Thyroid gland (tissue), 4 donors: ENCODE measurements at regions of chr16 and their contacts with region 1.

Region 1: GRCh38 chr16:83023640-83024039 is 396.9 kb downstream of the CDH13 start:
- DNase-seq: no peak
- H3K4me3 ChIP-seq: no peak overlapping the region
- H3K27ac ChIP-seq: no peak overlapping the region
- H3K4me1 ChIP-seq: no peaks in the 10 kb centered on the region
- H3K27me3 ChIP-seq: no peaks in the 10 kb centered on the region
- CTCF ChIP-seq: no peak
- POLR2A ChIP-seq: no peak

Region 2: GRCh38 chr16:82963653-82964052 is 60.0 kb before region 1 on chr16:
- intact Hi-C with region 1: loop called (anchors 10 kb)
- DNase-seq: no peak
- H3K4me3 ChIP-seq: no peak overlapping the region
- H3K27ac ChIP-seq: no peak overlapping the region
- H3K4me1 ChIP-seq: no peaks in the 10 kb centered on the region
- H3K27me3 ChIP-seq: no peaks in the 10 kb centered on the region
- CTCF ChIP-seq: no peak
- POLR2A ChIP-seq: no peak

Region 3: GRCh38 chr16:82979406-82980111 is 44.1 kb before region 1 on chr16:
- intact Hi-C with region 1: no loop called
- DNase-seq: no peak
- H3K4me3 ChIP-seq: no peak overlapping the region
- H3K27ac ChIP-seq: no peak overlapping the region
- H3K4me1 ChIP-seq: no peaks in the 10 kb centered on the region
- H3K27me3 ChIP-seq: no peaks in the 10 kb centered on the region
- CTCF ChIP-seq: no peak
- POLR2A ChIP-seq: no peak

Region 4: GRCh38 chr16:84396537-84397008 is 1372.9 kb after region 1 on chr16:
- intact Hi-C with region 1: no loop called
- DNase-seq: peak; percentile 93 to 97
- H3K4me3 ChIP-seq: no peak overlapping the region
- H3K27ac ChIP-seq: peak overlapping the region; percentile 88 to 96 (median 92)
- H3K4me1 ChIP-seq: peaks cover 20 to 26% of the 10 kb centered on the region in 2 donors
- H3K27me3 ChIP-seq: no peaks in the 10 kb centered on the region
- CTCF ChIP-seq: peak in 1 of 6 experiments; percentile 4
- POLR2A ChIP-seq: peak in 1 of 2 donors; percentile 45